AG04450 (cell line): ENCODE measurements at regions of chr7 and their contacts with region 1.

Region 1: DNA sequence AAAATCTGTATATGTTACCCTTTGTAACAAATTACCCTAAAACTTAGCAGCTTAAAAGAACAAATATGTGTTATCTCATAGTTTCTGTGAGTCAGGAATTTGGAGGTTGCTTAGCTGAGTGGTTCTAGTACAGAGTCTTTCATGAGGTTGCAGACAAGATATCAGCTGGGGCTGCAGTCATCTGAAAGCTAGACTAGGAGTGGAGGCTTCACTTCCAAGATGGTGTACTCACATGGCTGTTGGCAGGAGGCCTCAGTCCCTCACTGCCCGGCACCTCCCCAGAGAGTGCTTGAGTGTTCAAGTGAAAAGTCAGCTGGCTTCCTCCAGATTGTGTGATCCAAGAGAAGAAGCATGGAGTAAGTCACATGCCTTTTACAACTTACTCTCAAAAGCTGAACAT is 16.9 kb upstream of the GGCT start:
- DNase-seq: no peak
- H3K4me3 ChIP-seq: no peak overlapping the region
- H3K27ac ChIP-seq: no peak overlapping the region
- H3K27me3 ChIP-seq: no peaks in the 10 kb centered on the region
- CTCF ChIP-seq: no peak

Region 2: GRCh38 chr7:30548762-30549344 is 27.3 kb after region 1 on chr7:
- CTCF ChIA-PET with region 1: interaction called, 10 read pairs
- POLR2A ChIA-PET with region 1: no interaction called
- DNase-seq: peak; percentile 36
- H3K4me3 ChIP-seq: no peak overlapping the region
- H3K27ac ChIP-seq: no peak overlapping the region
- H3K27me3 ChIP-seq: no peaks in the 10 kb centered on the region
- CTCF ChIP-seq: peak; percentile 83

Region 3: DNA sequence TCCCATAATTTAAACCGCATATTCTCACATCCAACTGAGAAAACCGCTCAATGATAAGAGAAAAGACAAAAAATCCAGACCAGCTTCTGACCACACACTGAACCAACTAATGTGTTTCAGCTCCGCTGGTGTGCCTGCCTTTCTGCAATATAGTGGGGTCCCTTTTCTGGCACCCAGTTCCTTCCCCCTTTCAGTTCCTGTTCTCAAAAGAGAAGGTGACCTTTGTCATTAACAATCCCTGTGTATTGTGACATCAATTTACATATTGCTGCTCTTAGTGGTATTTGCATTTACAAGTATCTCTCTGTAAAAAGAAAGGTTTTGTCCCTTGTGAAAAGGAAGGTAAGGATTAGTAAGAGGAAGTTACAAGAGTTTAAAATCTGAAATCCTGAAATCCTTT is 1166.8 kb after region 1 on chr7:
- CTCF ChIA-PET with region 1: no interaction called
- POLR2A ChIA-PET with region 1: no interaction called
- DNase-seq: no peak
- H3K4me3 ChIP-seq: no peak overlapping the region
- H3K27ac ChIP-seq: no peak overlapping the region
- H3K27me3 ChIP-seq: no peaks in the 10 kb centered on the region
- CTCF ChIP-seq: no peak